Panc1 (cell line): ENCODE measurements at regions of chr20 and their contacts with region 1.

Region 1: GRCh38 chr20:31908424-31908823 is 38.0 kb downstream of the TTLL9 start:
- DNase-seq: no peak
- ATAC-seq: no peak
- H3K4me3 ChIP-seq: no peak overlapping the region
- H3K27ac ChIP-seq: no peak overlapping the region
- H3K4me1 ChIP-seq: no peaks in the 10 kb centered on the region
- H3K27me3 ChIP-seq: no peaks in the 10 kb centered on the region
- CTCF ChIP-seq: no peak

Region 2: GRCh38 chr20:31894980-31895675 is 13.3 kb before region 1 on chr20:
- CTCF ChIA-PET with region 1: no interaction called
- POLR2A ChIA-PET with region 1: interaction called, 11 read pairs
- in situ Hi-C with region 1: no loop called
- intact Hi-C with region 1: no loop called
- DNase-seq: peak; percentile 36
- ATAC-seq: peak; percentile 99
- H3K4me3 ChIP-seq: no peak overlapping the region
- H3K27ac ChIP-seq: no peak overlapping the region
- H3K4me1 ChIP-seq: no peaks in the 10 kb centered on the region
- H3K27me3 ChIP-seq: no peaks in the 10 kb centered on the region
- CTCF ChIP-seq: no peak

Region 3: GRCh38 chr20:31962761-31963160 is 54.3 kb after region 1 on chr20:
- CTCF ChIA-PET with region 1: no interaction called
- POLR2A ChIA-PET with region 1: no interaction called
- in situ Hi-C with region 1: no loop called
- intact Hi-C with region 1: no loop called
- DNase-seq: no peak
- ATAC-seq: no peak
- H3K4me3 ChIP-seq: no peak overlapping the region
- H3K27ac ChIP-seq: peak overlapping the region; percentile 44; the same call in 1 of the 2 replicates
- H3K4me1 ChIP-seq: peaks cover 22% of the 10 kb centered on the region
- H3K27me3 ChIP-seq: peaks cover 6% of the 10 kb centered on the region
- CTCF ChIP-seq: no peak

Region 4: DNA sequence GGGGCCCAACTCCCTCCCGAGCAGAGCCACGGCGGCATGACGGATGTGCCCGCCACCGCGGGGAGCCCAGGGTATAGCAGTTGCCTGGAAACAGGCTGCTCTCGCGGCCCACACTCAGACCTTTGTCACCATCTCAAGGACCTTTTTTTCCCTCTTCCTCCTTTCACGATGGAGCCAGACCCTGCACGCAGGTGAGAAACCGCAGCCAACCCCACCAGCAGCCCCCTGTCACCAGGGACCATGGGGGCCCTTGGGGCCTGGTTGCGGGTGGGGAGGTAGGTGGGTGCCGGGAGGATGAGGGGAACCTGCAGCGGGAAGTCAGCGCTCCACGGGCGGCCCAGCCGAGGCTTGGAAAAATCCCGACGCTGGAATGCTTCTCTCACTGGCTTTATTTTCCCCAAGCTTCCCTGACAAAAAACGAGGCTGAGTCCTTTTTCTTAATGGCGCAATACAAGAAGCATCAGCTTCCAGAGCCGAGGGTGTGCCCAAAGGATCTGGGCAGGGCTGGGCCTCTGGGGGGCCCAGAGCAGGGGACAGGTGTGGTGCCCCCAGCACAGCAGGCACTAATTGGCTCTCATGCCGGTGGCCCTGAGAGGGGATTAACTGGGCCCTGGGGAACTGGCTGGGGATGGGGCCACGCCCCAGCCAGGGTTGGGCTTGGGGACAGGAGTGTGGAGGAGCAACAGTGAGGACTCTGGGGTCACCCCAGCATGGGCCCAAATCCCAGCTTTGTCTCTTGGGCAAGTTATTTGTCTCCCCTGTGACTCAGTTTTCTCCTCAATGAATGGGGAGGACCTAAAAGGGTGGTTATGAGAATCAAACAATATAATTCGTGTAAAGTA is 652.8 kb after region 1 on chr20:
- CTCF ChIA-PET with region 1: no interaction called
- POLR2A ChIA-PET with region 1: no interaction called
- in situ Hi-C with region 1: no loop called
- intact Hi-C with region 1: no loop called
- DNase-seq: no peak
- ATAC-seq: no peak
- H3K4me3 ChIP-seq: no peak overlapping the region
- H3K27ac ChIP-seq: no peak overlapping the region
- H3K4me1 ChIP-seq: no peaks in the 10 kb centered on the region; the same call in 1 of the 2 replicates
- H3K27me3 ChIP-seq: no peaks in the 10 kb centered on the region
- CTCF ChIP-seq: no peak